ENCODE measurements at regions of chr1 and their contacts with region 1.

Region 1: DNA sequence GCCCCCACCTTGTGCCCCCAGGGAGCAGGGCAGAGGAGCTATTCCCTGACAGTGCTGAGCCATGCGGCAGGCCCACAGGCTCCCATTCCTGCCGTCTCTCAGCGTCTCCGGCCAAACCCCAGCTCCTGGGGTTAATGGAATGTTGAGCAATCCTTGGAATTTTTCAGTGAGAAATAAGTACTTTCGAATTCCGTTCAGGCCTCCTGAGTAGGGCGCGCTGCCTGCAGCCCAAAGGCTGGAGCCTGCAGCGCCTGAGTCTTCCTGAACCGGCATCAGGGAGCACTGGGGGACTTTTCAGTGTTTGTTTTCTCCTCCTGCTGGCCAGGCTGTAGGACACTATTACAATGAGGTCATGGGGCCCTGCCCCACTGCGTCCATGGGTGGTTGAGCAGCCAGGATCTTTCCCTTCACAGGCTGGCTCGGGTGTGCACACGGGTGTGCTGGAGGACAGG is 33.3 kb upstream of the CSF1 start:
- DNase-seq: peak; percentile 72 to 78
- H3K4me3 ChIP-seq: no peak overlapping the region
- H3K4me3 Mint-ChIP-seq: no peak overlapping the region
- H3K27ac Mint-ChIP-seq: peak overlapping the region; percentile 87
- H3K4me1 ChIP-seq: peaks cover 24% of the 10 kb centered on the region
- H3K4me1 Mint-ChIP-seq: peaks cover 16% of the 10 kb centered on the region
- H3K27me3 ChIP-seq: no peaks in the 10 kb centered on the region
- H3K27me3 Mint-ChIP-seq: no peaks in the 10 kb centered on the region
- CTCF ChIP-seq: peak; percentile 8 to 12

Region 2: DNA sequence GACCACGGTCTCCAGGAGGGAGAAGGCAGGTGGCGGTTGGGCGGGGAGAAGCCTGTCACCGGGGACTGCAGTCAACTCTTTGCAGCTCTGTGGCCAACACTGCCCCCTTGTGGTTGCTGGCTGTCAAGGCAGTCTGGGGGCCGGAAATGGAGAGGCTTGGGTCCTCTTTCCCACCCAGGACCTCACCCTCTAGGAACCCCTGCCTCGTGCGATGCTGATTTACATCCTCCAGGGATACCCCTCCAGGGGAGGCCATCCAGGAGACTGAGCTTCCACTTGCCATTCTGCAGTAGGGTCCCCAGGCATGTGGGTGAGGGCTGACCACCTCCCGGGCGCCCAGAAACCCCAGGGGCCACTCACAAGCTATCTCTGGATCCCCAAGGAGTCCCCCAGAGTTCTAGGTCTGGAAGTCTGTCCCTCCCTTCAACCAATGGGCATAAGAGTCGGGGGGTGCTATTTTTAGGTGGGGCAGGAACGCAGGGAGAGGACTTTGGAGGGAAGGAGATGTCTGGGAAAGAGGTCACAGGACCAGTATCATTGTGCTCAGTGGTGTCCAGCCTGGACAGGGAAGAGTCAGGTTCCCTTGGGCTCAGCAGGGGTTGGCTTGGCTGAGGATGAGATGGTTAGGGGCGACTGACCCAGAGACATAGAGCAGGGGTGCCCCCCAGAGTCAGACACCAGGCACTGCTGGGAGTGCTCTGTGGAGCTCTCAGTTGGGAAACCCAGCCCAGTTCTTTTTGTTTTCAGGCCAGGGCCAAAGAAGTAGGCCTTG is 344.8 kb before region 1 on chr1:
- CTCF ChIA-PET with region 1: no interaction called
- POLR2A ChIA-PET with region 1: no interaction called
- intact Hi-C with region 1: no loop called
- DNase-seq: peak; percentile 77 to 83
- H3K4me3 ChIP-seq: no peak overlapping the region
- H3K4me3 Mint-ChIP-seq: no peak overlapping the region
- H3K27ac Mint-ChIP-seq: no peak overlapping the region
- H3K4me1 ChIP-seq: no peaks in the 10 kb centered on the region; the same call in 1 of the 2 replicates
- H3K4me1 Mint-ChIP-seq: no peaks in the 10 kb centered on the region
- H3K27me3 ChIP-seq: no peaks in the 10 kb centered on the region
- H3K27me3 Mint-ChIP-seq: no peaks in the 10 kb centered on the region
- CTCF ChIP-seq: peak; percentile 74 to 80

Region 3: DNA sequence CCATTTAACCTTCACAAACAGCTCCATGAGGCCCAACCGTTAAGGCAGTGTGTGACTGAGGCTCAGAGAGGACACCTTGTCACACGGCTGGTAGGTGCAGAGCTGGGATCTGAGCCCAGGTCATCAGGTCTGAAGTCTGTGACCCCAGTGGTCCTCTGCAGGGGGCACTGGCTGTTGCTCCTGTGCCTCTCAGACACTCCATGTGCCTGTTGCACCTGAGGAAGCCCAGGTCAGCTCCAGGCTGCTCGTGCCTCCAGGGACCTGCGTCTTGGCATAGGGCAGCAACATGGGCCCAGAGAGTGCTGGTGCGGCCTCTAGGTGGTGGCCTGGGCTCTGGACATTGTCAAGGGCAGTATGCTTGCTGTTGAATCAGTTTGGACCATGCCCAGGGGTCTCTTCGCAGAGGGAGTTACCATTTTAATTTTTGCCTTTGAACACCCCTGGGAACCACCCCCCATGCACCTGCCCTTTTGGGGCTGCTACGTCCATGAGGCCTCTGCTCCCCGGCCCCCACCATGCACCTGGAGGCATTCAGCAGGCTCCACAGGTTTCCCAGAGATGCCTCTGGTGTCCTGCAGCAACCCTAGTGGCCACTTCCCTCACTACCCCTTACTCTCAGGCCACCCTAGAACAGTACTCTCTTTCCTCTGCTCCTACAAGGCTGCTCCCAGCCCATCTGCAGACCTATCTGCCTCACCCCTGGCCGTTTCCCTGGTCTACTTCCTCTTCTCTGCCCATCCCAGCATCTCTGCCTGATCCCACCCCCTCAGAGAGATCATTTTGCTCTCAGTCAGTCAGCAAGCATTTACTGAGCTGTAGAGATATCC is 88.4 kb before region 1 on chr1:
- CTCF ChIA-PET with region 1: no interaction called
- POLR2A ChIA-PET with region 1: no interaction called
- intact Hi-C with region 1: loop called (anchors 5 kb)
- DNase-seq: peak in 1 of 2 experiments; percentile 30
- H3K4me3 ChIP-seq: no peak overlapping the region
- H3K4me3 Mint-ChIP-seq: no peak overlapping the region
- H3K27ac Mint-ChIP-seq: no peak overlapping the region
- H3K4me1 ChIP-seq: peaks cover 13% of the 10 kb centered on the region
- H3K4me1 Mint-ChIP-seq: peaks cover 7% of the 10 kb centered on the region
- H3K27me3 ChIP-seq: no peaks in the 10 kb centered on the region
- H3K27me3 Mint-ChIP-seq: no peaks in the 10 kb centered on the region
- CTCF ChIP-seq: peak; percentile 38 to 42

Region 4: DNA sequence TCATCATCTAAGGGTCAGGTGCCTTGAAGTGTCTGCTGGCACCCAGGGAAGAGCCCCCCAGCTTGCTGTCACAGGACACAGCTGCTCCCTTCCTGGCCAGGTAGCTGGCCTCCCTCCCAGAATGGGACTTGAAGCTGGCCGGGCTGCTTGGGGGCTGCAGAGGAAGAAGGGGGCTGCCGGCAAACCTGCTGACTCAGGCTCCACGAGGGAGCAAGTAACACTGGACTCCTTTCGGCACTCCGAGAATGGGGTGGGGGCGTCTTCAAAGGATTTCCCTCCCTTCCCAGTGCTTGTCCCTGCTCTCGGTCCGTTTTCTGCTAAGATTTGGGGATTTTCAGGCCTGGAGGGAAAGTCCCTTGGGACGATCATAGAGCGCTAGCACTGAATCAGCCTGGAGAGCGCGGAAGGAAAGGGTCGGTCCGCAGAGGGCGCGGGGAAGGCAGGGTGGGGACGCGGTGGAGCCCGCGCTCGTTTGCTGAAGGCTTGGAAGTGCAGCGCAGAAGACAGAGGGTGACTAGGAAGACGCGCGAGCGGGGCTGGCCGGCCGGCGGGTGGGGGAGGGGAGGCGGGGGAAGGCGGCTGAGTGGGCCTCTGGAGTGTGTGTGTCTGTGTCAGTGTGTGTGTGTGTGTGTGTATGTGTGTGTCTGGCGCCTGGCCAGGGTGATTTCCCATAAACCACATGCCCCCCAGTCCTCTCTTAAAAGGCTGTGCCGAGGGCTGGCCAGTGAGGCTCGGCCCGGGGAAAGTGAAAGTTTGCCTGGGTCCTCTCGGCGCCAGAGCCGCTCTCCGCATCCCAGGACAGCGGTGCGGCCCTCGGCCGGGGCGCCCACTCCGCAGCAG is 33.0 kb after region 1 on chr1 and contains the start of gene CSF1:
- CTCF ChIA-PET with region 1: no interaction called
- POLR2A ChIA-PET with region 1: no interaction called
- intact Hi-C with region 1: loop called (anchors 2 kb)
- DNase-seq: peak; percentile 41 to 47
- H3K4me3 ChIP-seq: peak within 1 kb of the TSS; percentile 42
- H3K4me3 Mint-ChIP-seq: peak within 1 kb of the TSS; percentile 90
- H3K27ac Mint-ChIP-seq: peak within 1 kb of the TSS; percentile 66
- H3K4me1 ChIP-seq: peaks cover 4% of the 10 kb centered on the region
- H3K4me1 Mint-ChIP-seq: peaks cover 7% of the 10 kb centered on the region
- H3K27me3 ChIP-seq: no peaks in the 10 kb centered on the region
- H3K27me3 Mint-ChIP-seq: no peaks in the 10 kb centered on the region
- CTCF ChIP-seq: no peak
- total RNA-seq, gene CSF1: 3.7 and 3.9 TPM in 2 replicates

Region 5: DNA sequence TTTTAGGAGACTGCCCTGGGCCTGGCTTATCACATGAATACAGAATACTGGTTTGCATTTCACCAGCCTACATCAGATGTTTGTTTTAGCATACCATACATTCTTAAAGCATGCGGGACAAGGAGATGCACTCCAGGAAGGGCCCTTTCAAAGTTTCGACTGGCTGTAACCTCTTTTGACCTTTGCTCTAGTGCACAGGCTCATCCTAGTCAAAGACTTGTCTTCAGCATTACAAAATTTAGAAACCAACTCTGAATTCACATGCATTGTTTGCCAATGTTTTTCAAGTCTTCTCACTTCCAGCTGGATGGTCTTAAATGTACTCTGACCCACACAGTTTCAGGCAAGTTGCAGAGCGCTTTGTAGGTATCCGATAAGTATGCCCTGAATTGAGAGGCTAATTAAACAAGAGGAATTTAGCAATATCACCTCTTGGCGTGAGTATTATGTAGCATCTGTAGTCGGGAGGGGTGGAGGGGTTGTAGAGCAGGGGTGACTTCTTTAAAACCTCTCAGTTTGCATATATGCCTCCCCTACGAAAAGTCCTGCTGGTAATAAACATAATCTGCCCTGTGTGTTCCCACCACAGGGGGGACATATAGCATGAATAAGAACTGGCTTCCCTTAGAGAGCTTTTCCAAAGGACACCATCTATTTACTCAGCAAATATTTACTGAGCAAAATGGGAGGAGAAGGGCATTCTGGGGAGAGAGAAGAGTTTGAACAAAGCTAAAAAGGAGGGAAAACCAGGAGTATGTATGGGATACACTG is 82.8 kb after region 1 on chr1:
- CTCF ChIA-PET with region 1: no interaction called
- POLR2A ChIA-PET with region 1: interaction called, 3 read pairs
- intact Hi-C with region 1: loop called (anchors 1 kb)
- DNase-seq: peak; percentile 84 to 89
- H3K4me3 ChIP-seq: no peak overlapping the region
- H3K4me3 Mint-ChIP-seq: peak overlapping the region; percentile 62
- H3K27ac Mint-ChIP-seq: peak overlapping the region; percentile 80
- H3K4me1 ChIP-seq: peaks cover 59% of the 10 kb centered on the region
- H3K4me1 Mint-ChIP-seq: peaks cover 44% of the 10 kb centered on the region
- H3K27me3 ChIP-seq: no peaks in the 10 kb centered on the region
- H3K27me3 Mint-ChIP-seq: no peaks in the 10 kb centered on the region
- CTCF ChIP-seq: peak; percentile 11 to 26